Esophagus muscularis mucosa (tissue), 4 donors: ENCODE measurements at regions of chr12 and their contacts with region 1.

Region 1: DNA sequence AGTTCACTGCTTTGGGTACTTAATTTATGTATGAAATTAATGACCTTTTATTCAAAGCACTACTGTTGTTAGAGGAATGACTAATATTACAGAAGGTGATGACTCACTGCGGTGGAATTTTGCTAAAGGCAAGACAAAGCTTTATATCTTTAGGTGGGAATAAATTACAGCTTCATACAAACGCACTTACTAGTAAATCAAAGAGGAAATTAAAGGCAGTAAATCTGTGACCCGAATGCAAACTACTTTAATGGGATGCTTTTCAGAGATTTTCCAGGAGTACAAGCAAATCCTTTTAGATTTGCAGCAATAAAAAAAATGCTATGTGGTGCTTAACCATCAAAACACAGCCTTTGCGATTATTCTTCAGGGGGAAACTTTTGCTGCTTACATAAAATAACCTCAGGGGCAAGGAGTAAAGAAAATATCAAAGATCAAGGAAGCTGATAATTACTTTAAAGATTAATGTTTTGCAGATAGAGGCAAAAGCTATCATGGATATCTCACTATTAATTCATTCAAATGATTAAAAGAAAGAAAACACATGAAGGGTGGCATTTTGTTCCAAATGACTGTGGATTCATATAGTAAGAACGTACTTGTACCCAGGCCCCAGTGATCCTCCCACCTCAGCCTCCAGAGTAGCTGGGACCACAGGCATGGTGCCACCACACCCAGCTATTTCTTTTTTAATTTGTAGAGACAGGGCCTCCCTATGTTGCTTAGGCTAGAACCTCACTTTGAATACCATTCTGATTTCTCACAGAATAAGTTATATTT is 98.9 kb downstream of the DENND5B start:
- DNase-seq: no peak
- H3K4me3 ChIP-seq: no peak overlapping the region
- H3K27ac ChIP-seq: peak overlapping the region in 3 of 4 donors; percentile 14 to 22 (median 21)
- H3K4me1 ChIP-seq: peaks cover 10 to 50% (median 33%) of the 10 kb centered on the region in 4 donors
- H3K27me3 ChIP-seq: no peaks in the 10 kb centered on the region
- CTCF ChIP-seq: no peak
- EP300 ChIP-seq: no peak
- POLR2A ChIP-seq: no peak

Region 2: DNA sequence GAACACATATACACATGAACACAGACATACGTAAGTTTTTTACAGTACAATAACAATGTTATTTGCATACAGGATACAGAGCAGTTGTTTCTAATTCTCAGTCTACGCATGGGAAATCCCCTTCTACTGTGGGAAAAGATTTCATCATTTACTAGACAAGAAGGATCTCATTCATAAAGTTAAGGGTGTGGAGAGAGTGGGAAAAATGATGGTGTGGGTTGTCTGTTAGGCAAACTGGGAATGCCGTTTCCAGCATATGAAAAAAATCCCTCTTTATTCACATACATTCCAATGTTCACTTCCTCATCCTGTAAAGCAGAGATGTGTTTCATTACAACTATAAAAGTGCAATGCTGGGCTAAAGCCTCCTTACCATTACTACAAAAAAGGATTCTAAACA is 287.0 kb before region 1 on chr12:
- intact Hi-C with region 1: no loop called
- DNase-seq: no peak
- H3K4me3 ChIP-seq: no peak overlapping the region
- H3K27ac ChIP-seq: no peak overlapping the region
- H3K4me1 ChIP-seq: no peaks in the 10 kb centered on the region
- H3K27me3 ChIP-seq: no peaks in the 10 kb centered on the region
- CTCF ChIP-seq: no peak
- EP300 ChIP-seq: no peak
- POLR2A ChIP-seq: no peak

Region 3: DNA sequence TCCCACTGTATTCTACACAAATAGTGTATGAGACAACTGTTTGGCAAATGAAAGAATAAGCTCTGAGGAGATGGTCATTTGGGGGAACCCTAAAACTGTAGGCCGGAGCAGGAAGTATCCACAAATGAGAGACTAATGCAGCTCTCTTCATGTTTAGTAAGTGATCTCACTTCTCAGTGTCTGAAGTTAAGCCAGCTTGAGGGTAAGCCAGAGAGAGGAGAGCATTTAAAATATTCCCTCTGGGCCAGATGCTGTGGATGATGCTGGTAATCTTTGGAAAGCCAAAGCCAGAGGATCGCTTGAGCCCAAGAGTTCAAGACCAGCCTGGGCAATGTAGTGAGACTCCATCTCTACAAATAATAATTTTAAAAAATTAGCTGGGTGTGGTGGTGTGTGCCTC is 35.4 kb before region 1 on chr12:
- intact Hi-C with region 1: no loop called
- DNase-seq: no peak
- H3K4me3 ChIP-seq: no peak overlapping the region
- H3K27ac ChIP-seq: no peak overlapping the region
- H3K4me1 ChIP-seq: no peaks in the 10 kb centered on the region
- H3K27me3 ChIP-seq: no peaks in the 10 kb centered on the region
- CTCF ChIP-seq: no peak
- EP300 ChIP-seq: no peak
- POLR2A ChIP-seq: no peak

Region 4: DNA sequence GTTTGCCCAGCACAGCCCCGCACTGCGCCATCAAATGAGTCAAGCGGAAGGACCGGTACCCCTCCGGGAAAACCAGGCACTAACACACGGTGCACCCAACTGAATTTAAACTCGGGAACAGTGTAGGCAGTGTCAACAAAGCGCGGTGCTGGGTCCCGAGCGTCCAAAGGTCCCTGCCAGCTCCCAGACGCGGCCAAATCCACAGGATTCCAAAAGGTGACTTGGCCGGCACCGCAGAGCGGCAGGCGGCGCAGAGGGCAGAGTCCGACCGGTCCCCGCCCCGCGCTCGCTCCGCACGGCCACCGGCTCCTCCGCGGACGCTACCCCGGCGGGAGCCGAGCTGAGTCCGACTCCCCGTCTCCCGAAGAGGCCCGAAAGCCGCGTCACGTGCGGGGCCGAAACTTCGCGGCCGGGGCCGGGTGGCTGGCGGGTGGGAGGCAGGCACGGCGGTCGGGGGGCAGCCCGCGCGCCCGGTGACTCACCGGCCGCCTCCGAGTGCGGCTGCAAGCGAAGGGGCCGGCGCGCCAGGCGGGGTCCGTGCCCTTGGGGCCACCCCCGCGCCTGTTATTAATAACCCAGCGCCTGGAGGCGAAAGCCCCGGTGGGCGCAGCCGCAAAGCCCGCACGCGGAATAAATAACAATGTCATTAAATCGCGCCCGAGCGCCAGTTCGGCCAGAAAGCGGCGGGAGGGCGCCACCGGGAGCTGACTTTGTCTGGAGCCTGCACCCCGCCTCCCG is 98.1 kb after region 1 on chr12:
- intact Hi-C with region 1: loop called (anchors 10 kb)
- DNase-seq: no peak
- H3K4me3 ChIP-seq: peak overlapping the region; percentile 93 to 97 (median 96)
- H3K27ac ChIP-seq: peak overlapping the region; percentile 95 to 98 (median 96)
- H3K4me1 ChIP-seq: peaks cover 15 to 37% (median 33%) of the 10 kb centered on the region in 4 donors
- H3K27me3 ChIP-seq: no peaks in the 10 kb centered on the region
- CTCF ChIP-seq: no peak
- EP300 ChIP-seq: no peak
- POLR2A ChIP-seq: no peak